ENCODE measurements at regions of chr4 and their contacts with region 1.

Region 1: DNA sequence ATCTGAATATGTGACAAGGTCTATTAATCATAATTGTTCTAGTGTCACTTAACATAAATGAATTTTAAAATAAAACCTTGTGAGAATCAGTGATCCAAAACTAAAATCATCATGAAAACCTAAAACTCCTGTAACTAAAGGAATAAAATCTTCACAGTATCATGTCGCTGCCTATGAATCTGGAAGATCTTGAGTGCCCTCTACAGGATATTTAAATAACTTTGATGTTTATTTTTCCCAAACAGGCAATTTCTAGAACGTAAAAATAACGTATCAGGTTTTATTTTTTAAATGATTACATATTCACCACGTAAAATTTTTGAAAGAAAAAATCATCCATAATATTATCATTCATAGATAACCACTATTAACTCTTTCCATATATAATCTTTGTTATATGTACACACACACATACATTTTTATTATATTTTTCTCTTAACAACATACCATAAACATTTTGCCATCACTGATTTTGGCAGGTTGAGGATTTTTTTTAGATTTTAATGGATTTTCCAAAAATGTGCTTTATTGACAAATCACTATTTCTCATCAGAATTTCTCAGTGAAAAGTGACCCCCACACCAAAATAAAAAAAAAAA is 79.6 kb downstream of the COMMD8 start:
- DNase-seq: no peak
- H3K4me3 Mint-ChIP-seq: no peak overlapping the region
- H3K27ac Mint-ChIP-seq: no peak overlapping the region
- H3K4me1 Mint-ChIP-seq: no peaks in the 10 kb centered on the region
- H3K27me3 Mint-ChIP-seq: peaks cover 14% of the 10 kb centered on the region

Region 2: GRCh38 chr4:46329118-46329976 is 1054.6 kb before region 1 on chr4:
- CTCF ChIA-PET with region 1: no interaction called
- intact Hi-C with region 1: loop called (anchors 2 kb)
- DNase-seq: peak; percentile 5
- H3K4me3 Mint-ChIP-seq: no peak overlapping the region
- H3K27ac Mint-ChIP-seq: no peak overlapping the region
- H3K4me1 Mint-ChIP-seq: no peaks in the 10 kb centered on the region
- H3K27me3 Mint-ChIP-seq: no peaks in the 10 kb centered on the region

Region 3: DNA sequence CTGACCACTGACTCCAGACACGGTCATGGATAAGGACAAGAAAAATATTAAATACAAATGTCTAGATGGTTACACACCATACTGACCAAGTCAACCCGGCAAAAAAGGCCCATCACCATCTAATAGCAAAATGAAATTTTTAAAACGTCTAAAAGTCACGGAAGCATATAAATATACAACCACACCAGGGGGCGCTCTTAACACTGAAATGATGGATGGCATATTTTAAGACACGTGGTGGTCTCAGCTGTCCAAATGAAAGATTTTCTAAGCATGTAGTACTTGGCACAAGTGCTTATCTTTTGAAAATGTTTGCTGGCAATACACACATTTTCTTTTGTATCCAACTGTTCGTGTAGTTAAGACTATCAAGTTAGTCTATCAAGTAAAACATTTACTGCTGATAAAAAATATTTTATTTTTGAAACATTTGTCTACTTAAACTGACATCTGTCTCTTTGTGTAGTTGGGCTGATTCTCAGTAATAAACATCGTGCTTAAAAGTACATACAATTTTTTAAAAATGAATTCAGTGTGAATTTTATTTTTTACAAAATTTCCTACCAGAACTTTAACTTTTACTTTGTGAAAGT is 539.5 kb before region 1 on chr4:
- CTCF ChIA-PET with region 1: interaction called, 7 read pairs
- intact Hi-C with region 1: loop called (anchors 1 kb)
- DNase-seq: peak; percentile 66
- H3K4me3 Mint-ChIP-seq: no peak overlapping the region
- H3K27ac Mint-ChIP-seq: no peak overlapping the region
- H3K4me1 Mint-ChIP-seq: no peaks in the 10 kb centered on the region
- H3K27me3 Mint-ChIP-seq: no peaks in the 10 kb centered on the region

Region 4: DNA sequence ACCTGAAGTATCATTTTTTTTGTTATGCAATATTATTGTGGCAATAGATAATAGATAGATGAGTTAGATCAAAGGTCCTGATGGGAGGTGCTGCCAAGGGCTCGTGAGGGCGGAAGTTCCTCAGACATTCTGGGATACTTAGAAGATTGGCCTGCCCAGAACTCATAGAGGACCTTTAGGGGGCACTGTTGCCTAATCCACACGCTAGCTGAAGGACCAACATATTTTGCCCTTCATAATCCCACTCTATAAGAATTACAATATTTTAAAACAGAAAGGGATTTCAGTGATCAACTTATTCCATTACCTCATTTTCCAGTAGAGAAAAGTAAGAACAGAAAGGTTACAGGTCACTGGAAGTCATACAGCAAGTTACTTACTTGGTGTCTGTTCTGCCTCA is 451.9 kb before region 1 on chr4:
- CTCF ChIA-PET with region 1: interaction called, 3 read pairs
- intact Hi-C with region 1: loop called (anchors 2 kb)
- DNase-seq: peak; percentile 24
- H3K4me3 Mint-ChIP-seq: no peak overlapping the region
- H3K27ac Mint-ChIP-seq: no peak overlapping the region
- H3K4me1 Mint-ChIP-seq: no peaks in the 10 kb centered on the region
- H3K27me3 Mint-ChIP-seq: peaks cover 9% of the 10 kb centered on the region

Region 5: DNA sequence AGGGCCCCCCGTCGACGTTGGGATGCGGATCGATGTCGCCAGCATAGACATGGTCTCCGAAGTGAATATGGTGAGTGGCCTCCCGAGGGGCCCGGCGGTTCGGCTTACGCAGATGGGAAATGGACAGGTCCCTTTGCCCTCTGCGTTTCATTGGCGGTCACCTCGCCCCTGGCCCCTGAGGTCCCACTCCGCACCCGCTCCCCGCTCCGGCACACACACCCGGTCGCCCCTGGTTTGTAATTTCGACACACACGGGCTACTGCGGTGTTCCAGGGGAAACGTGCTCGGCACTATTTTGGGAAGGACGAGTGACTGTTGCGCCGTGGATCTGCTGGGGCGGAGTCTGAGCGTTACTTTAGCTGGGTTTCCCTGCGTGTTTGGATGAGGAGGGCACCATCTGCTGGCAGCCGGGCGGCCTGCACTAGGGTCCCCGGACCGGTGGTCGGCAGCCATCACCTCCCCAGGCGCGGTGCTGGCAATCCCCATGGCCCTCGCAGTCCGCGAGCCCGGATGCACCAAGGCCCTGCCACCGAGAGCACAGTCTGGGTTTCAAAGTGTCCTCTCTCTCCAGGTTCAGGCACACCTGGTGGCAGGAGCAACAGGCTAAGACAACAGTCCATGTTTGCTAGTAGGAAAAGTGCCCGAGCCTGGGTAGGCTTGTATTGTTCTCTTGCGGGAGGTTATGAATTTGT is 351.4 kb before region 1 on chr4:
- CTCF ChIA-PET with region 1: interaction called, 3 read pairs
- intact Hi-C with region 1: loop called (anchors 2 kb)
- DNase-seq: peak; percentile 66
- H3K4me3 Mint-ChIP-seq: peak overlapping the region; percentile 58
- H3K27ac Mint-ChIP-seq: no peak overlapping the region
- H3K4me1 Mint-ChIP-seq: peaks cover 14% of the 10 kb centered on the region
- H3K27me3 Mint-ChIP-seq: peaks cover 40% of the 10 kb centered on the region

Region 6: GRCh38 chr4:47122592-47123291 is 261.2 kb before region 1 on chr4:
- CTCF ChIA-PET with region 1: interaction called, 6 read pairs
- intact Hi-C with region 1: loop called (anchors 1 kb)
- DNase-seq: peak; percentile 68
- H3K4me3 Mint-ChIP-seq: no peak overlapping the region
- H3K27ac Mint-ChIP-seq: no peak overlapping the region
- H3K4me1 Mint-ChIP-seq: no peaks in the 10 kb centered on the region
- H3K27me3 Mint-ChIP-seq: no peaks in the 10 kb centered on the region

Region 7: DNA sequence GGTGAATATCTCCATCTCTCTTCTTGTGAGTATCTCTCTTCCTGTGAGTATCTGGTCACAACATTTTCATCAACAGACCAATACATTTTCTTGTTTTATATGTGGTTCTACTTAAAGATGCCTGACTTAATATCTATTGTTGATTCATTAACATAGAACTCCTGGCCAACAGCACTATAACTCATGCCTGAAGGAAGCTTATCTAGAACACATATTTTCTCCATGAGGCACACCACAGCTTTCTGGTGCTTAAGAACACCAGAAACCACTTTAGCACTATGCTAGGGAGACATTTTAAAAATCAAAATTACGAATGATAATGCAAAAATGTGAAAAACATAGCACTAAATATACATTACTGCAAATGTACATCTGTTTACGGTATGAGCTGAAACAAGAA is 162.2 kb before region 1 on chr4:
- CTCF ChIA-PET with region 1: no interaction called
- intact Hi-C with region 1: no loop called
- DNase-seq: no peak
- H3K4me3 Mint-ChIP-seq: no peak overlapping the region
- H3K27ac Mint-ChIP-seq: no peak overlapping the region
- H3K4me1 Mint-ChIP-seq: no peaks in the 10 kb centered on the region
- H3K27me3 Mint-ChIP-seq: peaks cover 2% of the 10 kb centered on the region

Region 8: GRCh38 chr4:47562297-47562696 is 178.4 kb after region 1 on chr4:
- CTCF ChIA-PET with region 1: interaction called, 8 read pairs
- intact Hi-C with region 1: loop called (anchors 5 kb)
- DNase-seq: no peak
- H3K4me3 Mint-ChIP-seq: no peak overlapping the region
- H3K27ac Mint-ChIP-seq: no peak overlapping the region
- H3K4me1 Mint-ChIP-seq: no peaks in the 10 kb centered on the region
- H3K27me3 Mint-ChIP-seq: no peaks in the 10 kb centered on the region

Region 9: GRCh38 chr4:48008021-48008596 is 624.2 kb after region 1 on chr4:
- CTCF ChIA-PET with region 1: no interaction called
- intact Hi-C with region 1: no loop called
- DNase-seq: no peak
- H3K4me3 Mint-ChIP-seq: no peak overlapping the region
- H3K27ac Mint-ChIP-seq: no peak overlapping the region
- H3K4me1 Mint-ChIP-seq: no peaks in the 10 kb centered on the region
- H3K27me3 Mint-ChIP-seq: no peaks in the 10 kb centered on the region